Activated CD8-positive, alpha-beta T cell treated with anti-CD3 and anti-CD28 coated beads, Interleukin-2, amount 10 ng/mL, durations not matched to agents 7 days and 5 days (primary cell): ENCODE measurements at regions of chr5 and their contacts with region 1.

Region 1: GRCh38 chr5:80672140-80672736 is 17.5 kb upstream of the DHFR start:
- DNase-seq: peak; percentile 80
- ATAC-seq: peak; percentile 84
- H3K4me3 Mint-ChIP-seq: no peak overlapping the region
- H3K27ac Mint-ChIP-seq: no peak overlapping the region
- H3K4me1 Mint-ChIP-seq: peaks cover 3% of the 10 kb centered on the region
- H3K27me3 Mint-ChIP-seq: no peaks in the 10 kb centered on the region

Region 2: GRCh38 chr5:80481019-80481893 is 191.0 kb before region 1 on chr5:
- CTCF ChIA-PET with region 1: interaction called, 11 read pairs
- POLR2A ChIA-PET with region 1: no interaction called
- DNase-seq: peak; percentile 68
- ATAC-seq: peak; percentile 88
- H3K4me3 Mint-ChIP-seq: no peak overlapping the region
- H3K27ac Mint-ChIP-seq: no peak overlapping the region
- H3K4me1 Mint-ChIP-seq: peaks cover 6% of the 10 kb centered on the region
- H3K27me3 Mint-ChIP-seq: peaks cover 7% of the 10 kb centered on the region

Region 3: GRCh38 chr5:80654391-80655230 is 17.6 kb before region 1 on chr5 and contains the starts of genes DHFR and MSH3:
- CTCF ChIA-PET with region 1: interaction called, 36 read pairs
- POLR2A ChIA-PET with region 1: interaction called, 22 read pairs
- DNase-seq: peak; percentile 94
- ATAC-seq: peak; percentile 63
- H3K4me3 Mint-ChIP-seq: peak within 1 kb of the TSS; percentile 83
- H3K27ac Mint-ChIP-seq: peak within 1 kb of the TSS; percentile 95
- H3K4me1 Mint-ChIP-seq: peaks cover 31% of the 10 kb centered on the region
- H3K27me3 Mint-ChIP-seq: no peaks in the 10 kb centered on the region
- total RNA-seq, gene DHFR: 96.2 to 102 TPM
- total RNA-seq, gene MSH3: 20.1 to 20.3 TPM

Region 4: GRCh38 chr5:80662108-80662507 is 10.1 kb before region 1 on chr5:
- CTCF ChIA-PET with region 1: interaction called, 36 read pairs
- POLR2A ChIA-PET with region 1: interaction called, 22 read pairs
- DNase-seq: no peak
- ATAC-seq: no peak
- H3K4me3 Mint-ChIP-seq: no peak overlapping the region
- H3K27ac Mint-ChIP-seq: no peak overlapping the region
- H3K4me1 Mint-ChIP-seq: peaks cover 7% of the 10 kb centered on the region
- H3K27me3 Mint-ChIP-seq: no peaks in the 10 kb centered on the region

Region 5: DNA sequence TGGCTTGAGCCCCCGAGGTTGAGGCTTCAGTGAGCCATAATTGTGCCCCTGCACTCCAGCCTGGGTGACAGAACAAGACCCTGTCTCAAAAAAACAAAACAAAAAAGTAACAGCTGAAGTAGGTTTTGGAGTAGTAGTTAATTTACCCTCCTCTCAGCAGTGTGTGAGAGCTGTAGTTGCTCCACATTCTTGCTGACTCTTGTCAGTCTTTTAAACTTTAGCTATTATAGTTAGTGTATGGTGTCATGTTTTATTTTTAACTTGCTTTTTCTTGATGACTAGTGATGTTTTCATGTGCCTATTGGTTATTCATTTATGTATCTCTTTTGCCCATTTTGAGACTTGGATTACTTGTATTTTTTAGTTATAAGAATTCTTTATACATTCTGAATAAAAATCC is 35.4 kb after region 1 on chr5:
- CTCF ChIA-PET with region 1: no interaction called
- POLR2A ChIA-PET with region 1: no interaction called
- DNase-seq: no peak
- ATAC-seq: no peak
- H3K4me3 Mint-ChIP-seq: no peak overlapping the region
- H3K27ac Mint-ChIP-seq: no peak overlapping the region
- H3K4me1 Mint-ChIP-seq: peaks cover 42% of the 10 kb centered on the region
- H3K27me3 Mint-ChIP-seq: no peaks in the 10 kb centered on the region